ENCODE measurements at regions of chr19 and their contacts with region 1.

Region 1: GRCh38 chr19:35935911-35936737 is at the start of gene LRFN3:
- DNase-seq: peak; percentile 71 to 75 (median 72)
- ATAC-seq: peak; percentile 29 to 57 (median 39)
- H3K4me3 ChIP-seq: peak within 1 kb of the TSS; percentile 44 to 59 (median 56)
- H3K27ac ChIP-seq: peak within 1 kb of the TSS in 2 of 3 donors; percentile 5 to 13
- H3K4me1 ChIP-seq: peaks cover 0 to 25% (median 3%) of the 10 kb centered on the region in 4 donors
- H3K27me3 ChIP-seq: no peaks in the 10 kb centered on the region
- CTCF ChIP-seq: no peak
- POLR2A ChIP-seq: no peak
- total RNA-seq, gene LRFN3: 5.6 to 8.6 (median 7.0) TPM

Region 2: GRCh38 chr19:35856546-35857149 is 79.5 kb before region 1 on chr19 and contains the start of gene KIRREL2:
- intact Hi-C with region 1: no loop called
- DNase-seq: no peak
- ATAC-seq: peak in 1 of 4 donors; percentile 12
- H3K4me3 ChIP-seq: peak within 1 kb of the TSS; percentile 11 to 39 (median 29)
- H3K27ac ChIP-seq: no peak within 1 kb of the TSS
- H3K4me1 ChIP-seq: peaks cover 0 to 10% (median 2%) of the 10 kb centered on the region in 4 donors
- H3K27me3 ChIP-seq: peaks cover 0 to 12% of the 10 kb centered on the region in 2 donors
- CTCF ChIP-seq: no peak
- POLR2A ChIP-seq: no peak
- total RNA-seq, gene KIRREL2: not detected

Region 3: GRCh38 chr19:35879770-35880317 is 56.3 kb before region 1 on chr19:
- intact Hi-C with region 1: loop called (anchors 5 kb)
- DNase-seq: peak; percentile 91 to 92 (median 92)
- ATAC-seq: peak; percentile 94 to 99 (median 97)
- H3K4me3 ChIP-seq: no peak overlapping the region
- H3K27ac ChIP-seq: no peak overlapping the region
- H3K4me1 ChIP-seq: no peaks in the 10 kb centered on the region
- H3K27me3 ChIP-seq: no peaks in the 10 kb centered on the region
- CTCF ChIP-seq: no peak
- POLR2A ChIP-seq: no peak

Measured in right lobe of liver (tissue), 6 donors.